ENCODE measurements at regions of chr4 and their contacts with region 1.

Region 1: GRCh38 chr4:26459756-26460530 is 30.3 kb downstream of the CCKAR start:
- DNase-seq: no peak
- H3K4me3 ChIP-seq: no peak overlapping the region
- H3K27ac ChIP-seq: no peak overlapping the region
- H3K4me1 ChIP-seq: no peaks in the 10 kb centered on the region
- H3K27me3 ChIP-seq: no peaks in the 10 kb centered on the region
- CTCF ChIP-seq: no peak
- EP300 ChIP-seq: no peak
- POLR2A ChIP-seq: no peak

Region 2: GRCh38 chr4:25223802-25224375 is 1236.1 kb before region 1 on chr4:
- intact Hi-C with region 1: no loop called
- DNase-seq: no peak
- H3K4me3 ChIP-seq: no peak overlapping the region
- H3K27ac ChIP-seq: no peak overlapping the region
- H3K4me1 ChIP-seq: no peaks in the 10 kb centered on the region
- H3K27me3 ChIP-seq: no peaks in the 10 kb centered on the region
- CTCF ChIP-seq: no peak
- EP300 ChIP-seq: no peak
- POLR2A ChIP-seq: no peak

Region 3: GRCh38 chr4:25970226-25970675 is 489.7 kb before region 1 on chr4:
- intact Hi-C with region 1: no loop called
- DNase-seq: no peak
- H3K4me3 ChIP-seq: no peak overlapping the region
- H3K27ac ChIP-seq: no peak overlapping the region
- H3K4me1 ChIP-seq: peaks cover 5% of the 10 kb centered on the region
- H3K27me3 ChIP-seq: no peaks in the 10 kb centered on the region
- CTCF ChIP-seq: no peak
- EP300 ChIP-seq: no peak
- POLR2A ChIP-seq: no peak

Region 4: DNA sequence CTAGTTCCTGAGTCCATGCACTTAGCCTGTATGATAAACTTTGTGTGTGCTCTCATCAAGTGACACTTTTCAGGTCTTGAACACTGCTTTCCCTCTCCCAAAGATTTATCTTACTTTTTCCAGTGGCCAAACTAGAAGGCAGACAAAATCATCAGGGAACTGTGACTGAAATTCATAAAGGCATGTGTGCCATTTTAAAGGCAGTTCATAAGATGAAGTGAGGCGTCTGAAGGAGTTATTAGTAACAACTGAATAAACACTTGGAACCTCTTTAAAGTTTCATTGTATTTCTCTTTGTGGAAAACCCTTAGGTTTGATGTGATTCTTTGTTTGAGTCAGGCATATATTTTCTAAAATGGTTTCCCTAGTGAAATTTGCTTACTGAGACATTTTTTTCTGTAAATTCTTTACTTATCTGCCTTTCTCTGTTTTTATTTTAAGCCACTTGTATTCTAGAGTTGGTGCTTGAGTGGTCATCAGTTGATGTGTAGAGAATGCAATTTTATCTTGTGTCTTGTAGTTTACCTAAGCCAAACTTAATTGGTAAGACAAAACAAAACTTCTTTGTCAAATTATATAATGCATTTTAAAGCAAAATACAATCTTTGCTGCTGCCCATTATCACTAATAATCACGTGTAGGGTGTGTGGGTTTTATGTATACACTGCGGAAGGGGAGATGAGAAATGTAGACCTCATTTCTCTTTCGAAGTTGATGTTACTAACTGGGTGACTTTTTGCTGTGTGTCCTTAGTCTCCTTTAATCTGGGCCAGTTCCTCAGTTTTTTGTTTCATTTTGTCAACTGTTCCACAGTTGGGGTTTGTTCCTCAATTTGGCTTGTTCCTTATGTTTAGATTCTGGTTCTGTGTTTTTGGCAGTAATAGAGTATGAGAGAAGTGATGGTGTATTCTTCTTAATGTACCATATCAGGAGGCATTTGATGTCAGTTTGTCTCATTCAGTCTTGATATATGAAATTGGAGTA is 82.3 kb before region 1 on chr4:
- intact Hi-C with region 1: no loop called
- DNase-seq: no peak
- H3K4me3 ChIP-seq: no peak overlapping the region
- H3K27ac ChIP-seq: no peak overlapping the region
- H3K4me1 ChIP-seq: peaks cover 2% of the 10 kb centered on the region
- H3K27me3 ChIP-seq: no peaks in the 10 kb centered on the region
- CTCF ChIP-seq: no peak
- EP300 ChIP-seq: no peak
- POLR2A ChIP-seq: no peak

Region 5: DNA sequence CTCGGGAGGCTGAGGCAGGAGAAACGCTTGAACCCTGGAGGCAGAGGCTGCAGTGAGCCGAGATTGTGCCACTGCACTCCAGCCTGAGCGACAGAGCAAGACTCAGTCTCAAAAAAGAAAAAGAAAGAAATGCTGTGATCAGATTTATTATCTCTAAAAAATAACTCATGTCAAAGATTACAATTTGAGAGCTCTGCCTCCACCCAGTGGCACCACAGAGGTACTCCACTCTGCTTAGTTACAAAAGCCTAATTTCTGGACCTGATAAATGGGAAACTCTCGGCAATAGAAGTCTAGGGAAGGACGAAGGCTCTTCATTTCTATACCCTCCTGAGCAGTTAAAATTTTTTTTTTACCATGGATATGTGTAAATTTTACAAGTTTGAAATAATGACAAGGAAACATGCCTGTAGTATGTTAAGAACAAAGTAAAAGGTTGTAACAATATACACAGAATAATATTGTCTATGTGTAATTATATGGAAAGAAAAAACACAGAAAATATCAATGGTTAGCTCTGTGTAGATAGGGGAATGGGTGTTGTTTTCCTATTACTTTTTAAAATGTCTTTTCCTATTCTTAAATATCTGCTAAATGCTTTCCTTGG is 550.5 kb after region 1 on chr4:
- intact Hi-C with region 1: loop called in 1 of 4 experiments (anchors 10 kb)
- DNase-seq: peak; percentile 54 to 75 (median 67)
- H3K4me3 ChIP-seq: no peak overlapping the region
- H3K27ac ChIP-seq: peak overlapping the region in 1 of 2 donors; percentile 1
- H3K4me1 ChIP-seq: peaks cover 3% of the 10 kb centered on the region
- H3K27me3 ChIP-seq: no peaks in the 10 kb centered on the region
- CTCF ChIP-seq: peak; percentile 72 to 80 (median 78)
- EP300 ChIP-seq: no peak
- POLR2A ChIP-seq: no peak